Upper lobe of right lung (tissue), 1 donor: ENCODE measurements at regions of chr3 and their contacts with region 1.

Region 1: DNA sequence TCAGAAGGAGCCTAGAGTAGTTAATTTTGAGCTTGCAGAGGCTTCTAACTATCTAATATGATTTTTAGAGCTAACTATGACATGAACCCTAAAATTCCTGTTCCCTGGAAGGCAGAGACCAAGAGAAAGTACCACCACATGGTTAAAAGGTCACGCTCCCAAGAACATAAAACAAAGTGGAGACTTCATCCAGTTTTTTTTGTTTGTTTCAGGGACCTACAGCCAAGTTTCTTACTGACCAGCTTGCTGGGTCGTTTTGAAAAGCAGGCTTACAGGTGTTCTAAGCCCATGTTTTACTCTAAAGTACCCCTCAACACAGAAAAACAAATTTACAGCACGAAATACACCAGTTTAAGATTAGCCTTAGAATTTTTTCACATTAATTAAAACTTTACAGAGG is 39.6 kb upstream of the SKIL start:
- DNase-seq: no peak
- ATAC-seq: no peak
- H3K4me3 ChIP-seq: no peak overlapping the region
- H3K27ac ChIP-seq: no peak overlapping the region
- H3K4me1 ChIP-seq: no peaks in the 10 kb centered on the region
- H3K27me3 ChIP-seq: no peaks in the 10 kb centered on the region
- CTCF ChIP-seq: no peak

Region 2: DNA sequence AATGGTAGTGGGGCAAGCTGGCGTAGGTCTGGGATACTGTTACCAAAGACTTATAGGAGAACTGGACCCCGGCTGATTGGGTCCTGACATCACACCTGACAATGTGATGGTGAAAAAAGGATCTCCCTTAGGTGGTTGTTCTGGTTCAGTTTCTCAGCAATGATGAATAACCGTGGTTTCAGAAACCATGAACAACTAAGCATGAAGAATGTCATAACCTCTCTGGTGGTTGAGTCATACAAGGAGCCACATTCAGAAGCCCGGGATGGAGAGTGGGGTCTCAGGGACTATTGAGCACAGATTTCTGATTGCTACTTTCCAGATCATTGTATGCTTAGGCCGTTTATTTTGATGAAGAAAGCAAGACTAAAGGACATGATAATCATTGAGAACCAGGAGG is 262.7 kb before region 1 on chr3:
- intact Hi-C with region 1: no loop called
- DNase-seq: no peak
- ATAC-seq: no peak
- H3K4me3 ChIP-seq: no peak overlapping the region
- H3K27ac ChIP-seq: no peak overlapping the region
- H3K4me1 ChIP-seq: no peaks in the 10 kb centered on the region
- H3K27me3 ChIP-seq: no peaks in the 10 kb centered on the region
- CTCF ChIP-seq: no peak

Region 3: DNA sequence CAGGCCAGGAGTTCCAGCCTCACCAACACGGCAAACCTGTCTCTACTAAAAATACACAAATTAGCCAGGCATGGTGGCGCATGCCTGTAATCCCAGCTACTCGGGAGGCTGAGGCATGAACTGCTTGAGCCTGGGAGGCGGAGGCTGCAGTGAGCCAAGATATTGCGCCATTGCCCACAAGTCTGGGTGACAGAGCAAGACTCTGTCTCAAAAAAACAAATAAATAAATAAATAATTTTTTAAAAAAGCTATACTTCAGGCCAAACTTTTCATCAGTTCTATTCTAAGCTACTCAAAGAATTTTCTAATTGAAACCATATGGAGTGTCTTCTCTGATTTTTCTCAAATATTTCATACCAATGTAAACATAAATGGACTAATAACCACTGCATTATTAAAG is 180.0 kb before region 1 on chr3:
- intact Hi-C with region 1: no loop called
- DNase-seq: no peak
- ATAC-seq: no peak
- H3K4me3 ChIP-seq: no peak overlapping the region
- H3K27ac ChIP-seq: no peak overlapping the region
- H3K4me1 ChIP-seq: no peaks in the 10 kb centered on the region
- H3K27me3 ChIP-seq: no peaks in the 10 kb centered on the region
- CTCF ChIP-seq: no peak

Region 4: GRCh38 chr3:170405101-170405500 is 87.1 kb after region 1 on chr3:
- intact Hi-C with region 1: loop called (anchors 10 kb)
- DNase-seq: no peak
- ATAC-seq: no peak
- H3K4me3 ChIP-seq: no peak overlapping the region
- H3K27ac ChIP-seq: no peak overlapping the region
- H3K4me1 ChIP-seq: no peaks in the 10 kb centered on the region
- H3K27me3 ChIP-seq: no peaks in the 10 kb centered on the region
- CTCF ChIP-seq: no peak